Pancreas (tissue), 10 donors: ENCODE measurements at regions of chr1 and their contacts with region 1.

Region 1: DNA sequence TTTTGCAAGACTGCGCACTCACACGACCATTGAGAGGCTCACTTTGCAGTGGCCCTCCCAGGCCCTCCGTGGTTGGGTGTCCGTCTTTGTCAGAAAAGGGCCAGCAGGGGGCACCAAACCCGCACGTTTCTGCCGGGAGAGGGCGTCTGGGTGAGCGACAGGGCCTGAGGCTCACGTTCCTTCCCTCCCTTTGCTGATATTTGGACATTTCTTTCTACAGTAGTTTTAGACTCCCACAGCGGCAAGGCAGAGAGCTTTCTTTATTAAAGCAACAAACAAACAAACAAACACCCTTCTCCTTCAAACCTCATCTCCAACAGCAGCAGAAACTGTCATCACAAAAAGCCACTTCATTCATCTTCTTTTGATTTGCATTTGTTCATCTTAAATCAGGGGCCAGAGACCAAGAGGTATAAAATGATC is 79.2 kb upstream of the WDR26 start:
- DNase-seq: peak; percentile 73 to 96 (median 86)
- ATAC-seq: peak; percentile 89 to 98 (median 97)
- H3K4me3 ChIP-seq: no peak overlapping the region
- H3K27ac ChIP-seq: no peak overlapping the region
- H3K4me1 ChIP-seq: no peaks in the 10 kb centered on the region
- H3K27me3 ChIP-seq: no peaks in the 10 kb centered on the region
- CTCF ChIP-seq: peak; percentile 82 to 91 (median 84)

Region 2: DNA sequence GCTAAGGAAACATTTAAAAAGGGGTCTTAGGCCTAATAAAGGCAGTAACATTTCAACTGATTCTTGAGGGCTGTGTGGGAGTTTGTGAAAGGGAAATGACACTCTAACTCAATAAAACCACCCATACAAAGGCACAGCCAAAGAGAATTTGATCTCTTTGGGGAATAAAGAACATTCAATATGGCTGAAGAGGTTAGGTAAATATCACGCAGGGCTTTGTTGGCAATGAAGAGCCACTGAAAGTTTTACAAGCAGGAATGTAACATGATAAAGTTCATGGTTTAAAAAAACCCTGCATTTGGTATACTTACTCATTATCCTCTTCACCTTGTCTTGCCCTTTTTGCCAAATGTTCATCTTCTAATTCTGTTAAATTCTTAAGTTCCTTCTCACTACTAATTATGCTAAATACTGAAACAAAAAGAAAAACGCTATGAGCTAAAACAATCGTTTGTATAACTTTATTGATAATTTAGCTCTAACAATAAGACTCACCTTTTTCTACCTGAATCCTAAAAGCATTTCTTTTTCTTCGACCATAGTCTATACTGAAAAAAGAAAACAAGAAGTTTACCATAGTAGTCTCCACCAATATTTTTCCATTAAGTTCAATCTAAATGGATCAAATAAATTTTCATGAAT is 196.3 kb before region 1 on chr1:
- intact Hi-C with region 1: no loop called
- DNase-seq: no peak
- ATAC-seq: no peak
- H3K4me3 ChIP-seq: no peak overlapping the region
- H3K27ac ChIP-seq: no peak overlapping the region
- H3K4me1 ChIP-seq: no peaks in the 10 kb centered on the region
- H3K27me3 ChIP-seq: no peaks in the 10 kb centered on the region
- CTCF ChIP-seq: no peak

Region 3: DNA sequence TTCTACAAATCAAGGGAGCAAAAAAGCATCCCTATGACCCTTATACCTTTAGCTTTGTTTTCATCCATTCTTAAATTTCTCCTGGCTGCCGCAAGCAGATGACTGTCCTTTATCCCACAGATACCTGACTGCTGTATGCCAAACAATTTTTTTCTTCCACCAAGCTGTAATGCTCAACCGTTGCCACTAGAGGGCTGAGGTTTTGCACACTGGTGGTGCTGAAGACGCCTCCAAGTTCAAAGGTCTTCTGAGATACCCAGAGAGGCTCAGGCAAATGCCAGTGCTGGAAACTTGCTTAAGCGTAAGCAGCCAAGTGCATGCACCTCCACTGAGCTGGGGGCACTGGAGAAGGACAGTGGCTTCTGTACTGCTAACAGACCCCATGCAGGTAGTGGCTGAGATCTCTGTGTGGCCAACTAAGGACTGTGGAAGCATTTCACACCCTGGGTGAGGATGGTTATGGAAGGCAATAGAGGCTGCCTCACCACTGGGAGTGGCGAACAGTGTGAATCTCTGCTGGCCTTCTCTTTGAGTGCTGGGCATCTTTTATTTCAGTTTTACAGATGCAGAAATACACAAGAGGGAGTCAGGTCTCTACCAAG is 130.9 kb after region 1 on chr1:
- intact Hi-C with region 1: loop called in 1 of 3 experiments (anchors 5 kb)
- DNase-seq: peak in 2 of 6 donors; percentile 63 to 68
- ATAC-seq: peak in 3 of 4 donors; percentile 65 to 78 (median 73)
- H3K4me3 ChIP-seq: no peak overlapping the region
- H3K27ac ChIP-seq: no peak overlapping the region
- H3K4me1 ChIP-seq: peaks cover 0 to 8% (median 7%) of the 10 kb centered on the region in 3 donors
- H3K27me3 ChIP-seq: no peaks in the 10 kb centered on the region
- CTCF ChIP-seq: peak; percentile 81 to 90 (median 86)

Region 4: DNA sequence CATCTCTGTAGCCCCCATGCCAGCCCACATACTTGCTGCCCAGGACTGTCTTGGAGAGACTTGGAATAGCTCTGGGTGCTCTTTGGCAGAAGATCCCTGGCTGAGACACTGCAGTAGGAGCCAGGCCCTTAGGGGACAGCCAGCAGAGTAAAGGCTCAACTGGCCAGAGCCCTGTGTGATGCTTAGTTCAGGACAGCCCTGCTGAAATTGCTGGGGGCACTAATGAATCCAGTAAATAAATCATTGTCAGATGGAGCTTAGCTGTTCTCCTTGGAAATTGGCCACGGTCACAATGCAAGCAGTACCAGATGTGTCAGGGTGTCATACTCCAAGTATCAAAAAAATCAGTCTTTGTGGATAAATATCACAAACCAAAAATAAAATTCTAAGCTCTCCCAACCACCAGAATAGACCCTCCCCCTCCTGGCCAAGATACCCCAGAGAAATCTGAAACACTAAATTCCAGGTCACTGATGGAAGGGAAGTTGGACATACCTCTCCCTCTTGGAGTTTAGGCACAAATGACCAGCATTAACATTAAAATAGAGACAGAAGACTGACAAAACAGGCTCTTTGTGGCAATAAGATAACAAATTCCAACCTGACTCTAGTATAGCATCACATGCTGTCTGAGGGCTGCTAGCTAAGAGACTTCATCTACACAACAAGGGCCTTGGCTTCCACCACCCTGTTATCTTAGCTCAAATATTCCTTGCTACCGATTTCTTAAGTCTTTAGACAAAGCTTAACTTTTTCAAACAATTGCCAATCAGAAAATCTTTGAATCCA is 332.5 kb after region 1 on chr1:
- intact Hi-C with region 1: loop called in 2 of 3 experiments (anchors 5 to 10 kb)
- DNase-seq: no peak
- ATAC-seq: no peak
- H3K4me3 ChIP-seq: no peak overlapping the region
- H3K27ac ChIP-seq: no peak overlapping the region
- H3K4me1 ChIP-seq: no peaks in the 10 kb centered on the region
- H3K27me3 ChIP-seq: no peaks in the 10 kb centered on the region
- CTCF ChIP-seq: no peak

Region 5: DNA sequence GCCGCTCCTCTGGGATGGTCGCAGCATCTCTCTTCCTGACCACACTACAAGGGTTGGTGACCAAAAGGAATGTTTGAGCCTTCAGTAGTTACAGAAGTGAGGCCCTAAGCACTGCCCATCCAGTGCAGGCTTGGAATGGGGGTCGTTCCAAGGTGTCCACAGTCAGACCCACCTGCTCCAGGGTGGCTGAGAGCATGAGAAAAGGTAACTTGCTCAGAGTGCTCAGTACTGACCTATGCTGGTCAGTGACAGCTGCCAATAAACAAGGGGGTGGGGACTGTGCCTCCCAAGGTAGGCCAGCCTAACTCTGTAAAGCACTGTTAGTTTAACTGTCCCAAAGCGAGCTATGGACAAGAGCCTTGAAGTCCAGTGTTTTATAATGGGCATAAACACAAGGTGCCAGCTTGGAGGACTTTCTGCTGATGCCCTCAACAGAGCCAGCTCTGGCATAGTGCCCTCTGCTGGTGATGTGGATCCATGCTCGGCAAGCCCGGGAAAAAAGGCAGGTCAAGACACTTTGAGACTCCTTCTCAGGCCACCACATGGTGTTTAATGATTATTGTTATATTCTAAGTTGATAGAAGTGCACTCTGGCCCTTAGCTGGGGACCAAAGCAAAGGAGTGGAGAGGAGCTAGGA is 337.5 kb after region 1 on chr1:
- intact Hi-C with region 1: loop called in 2 of 3 experiments (anchors 5 to 10 kb)
- DNase-seq: peak; percentile 49 to 81 (median 77)
- ATAC-seq: peak; percentile 65 to 74 (median 74)
- H3K4me3 ChIP-seq: no peak overlapping the region
- H3K27ac ChIP-seq: peak overlapping the region in 3 of 4 donors; percentile 43 to 69 (median 63)
- H3K4me1 ChIP-seq: peaks cover 0 to 10% (median 7%) of the 10 kb centered on the region in 3 donors
- H3K27me3 ChIP-seq: no peaks in the 10 kb centered on the region
- CTCF ChIP-seq: peak; percentile 42 to 51 (median 50)

Region 6: GRCh38 chr1:224914292-224914900 is 400.6 kb after region 1 on chr1:
- intact Hi-C with region 1: loop called in 2 of 3 experiments (anchors 5 to 10 kb)
- DNase-seq: no peak
- ATAC-seq: no peak
- H3K4me3 ChIP-seq: no peak overlapping the region
- H3K27ac ChIP-seq: no peak overlapping the region
- H3K4me1 ChIP-seq: no peaks in the 10 kb centered on the region
- H3K27me3 ChIP-seq: no peaks in the 10 kb centered on the region
- CTCF ChIP-seq: no peak

Region 7: DNA sequence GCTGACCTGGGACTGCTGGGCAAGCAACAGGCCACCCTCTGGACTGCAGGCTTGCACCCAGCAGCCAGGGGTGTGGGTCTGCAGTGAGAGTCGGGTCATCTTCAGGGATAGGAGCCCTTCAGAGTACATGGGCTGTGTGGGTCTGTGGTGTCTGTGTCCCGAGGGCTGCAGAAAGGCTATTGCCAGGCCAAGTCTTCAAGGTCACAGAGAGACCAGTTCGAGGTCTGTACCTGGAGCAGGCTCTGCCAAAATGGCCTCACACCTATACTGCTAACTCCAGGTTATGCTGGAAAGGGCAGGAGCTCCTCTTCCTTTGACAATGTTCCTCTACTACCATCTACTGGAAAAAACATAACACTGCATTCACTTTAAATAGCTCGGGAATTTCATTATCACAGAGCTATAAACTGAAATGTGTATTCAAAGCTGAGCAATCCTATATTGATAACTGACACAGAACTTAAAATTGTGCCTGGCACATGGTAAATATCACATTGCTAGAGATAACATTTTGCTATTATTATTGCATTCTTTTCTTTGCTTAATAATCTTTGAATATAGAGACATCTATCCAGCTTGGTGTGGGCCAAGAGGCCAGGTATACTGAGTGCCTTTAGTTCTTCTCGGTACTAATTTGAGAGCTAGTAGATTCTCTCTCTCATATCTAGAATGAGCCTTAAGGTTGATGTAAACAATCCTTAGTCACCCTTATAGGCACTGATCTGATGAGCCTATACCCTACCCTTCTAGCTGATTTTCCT is 408.8 kb after region 1 on chr1:
- intact Hi-C with region 1: loop called (anchors 5 to 10 kb)
- DNase-seq: peak in 5 of 6 donors; percentile 30 to 59 (median 35)
- ATAC-seq: peak; percentile 88 to 97 (median 96)
- H3K4me3 ChIP-seq: no peak overlapping the region
- H3K27ac ChIP-seq: no peak overlapping the region
- H3K4me1 ChIP-seq: peaks cover 0 to 12% (median 10%) of the 10 kb centered on the region in 3 donors
- H3K27me3 ChIP-seq: no peaks in the 10 kb centered on the region
- CTCF ChIP-seq: peak; percentile 30 to 72 (median 60)